A549 (cell line): ENCODE measurements at regions of chr20 and their contacts with region 1.

Region 1: GRCh38 chr20:36835453-36836198 is 40.3 kb upstream of the TLDC2 start:
- DNase-seq: peak; percentile 92 to 98
- ATAC-seq: peak; percentile 97 to 98
- H3K4me3 ChIP-seq: peak overlapping the region; percentile 33
- H3K27ac ChIP-seq: peak overlapping the region; percentile 87 to 92
- H3K4me1 ChIP-seq: peaks cover 34% of the 10 kb centered on the region
- CTCF ChIP-seq: no peak
- EP300 ChIP-seq: no peak
- POLR2A ChIP-seq: 0 out of 2 replicates have a peak, but pooled peaks have one; percentile 15
- RAD21 ChIP-seq: no peak

Region 2: GRCh38 chr20:36815454-36816091 is 20.1 kb before region 1 on chr20:
- CTCF ChIA-PET with region 1: interaction called, 32 read pairs
- POLR2A ChIA-PET with region 1: no interaction called
- DNase-seq: no peak
- ATAC-seq: no peak
- H3K4me3 ChIP-seq: no peak overlapping the region
- H3K27ac ChIP-seq: no peak overlapping the region
- H3K4me1 ChIP-seq: no peaks in the 10 kb centered on the region
- CTCF ChIP-seq: no peak
- EP300 ChIP-seq: no peak
- POLR2A ChIP-seq: no peak
- RAD21 ChIP-seq: no peak

Region 3: DNA sequence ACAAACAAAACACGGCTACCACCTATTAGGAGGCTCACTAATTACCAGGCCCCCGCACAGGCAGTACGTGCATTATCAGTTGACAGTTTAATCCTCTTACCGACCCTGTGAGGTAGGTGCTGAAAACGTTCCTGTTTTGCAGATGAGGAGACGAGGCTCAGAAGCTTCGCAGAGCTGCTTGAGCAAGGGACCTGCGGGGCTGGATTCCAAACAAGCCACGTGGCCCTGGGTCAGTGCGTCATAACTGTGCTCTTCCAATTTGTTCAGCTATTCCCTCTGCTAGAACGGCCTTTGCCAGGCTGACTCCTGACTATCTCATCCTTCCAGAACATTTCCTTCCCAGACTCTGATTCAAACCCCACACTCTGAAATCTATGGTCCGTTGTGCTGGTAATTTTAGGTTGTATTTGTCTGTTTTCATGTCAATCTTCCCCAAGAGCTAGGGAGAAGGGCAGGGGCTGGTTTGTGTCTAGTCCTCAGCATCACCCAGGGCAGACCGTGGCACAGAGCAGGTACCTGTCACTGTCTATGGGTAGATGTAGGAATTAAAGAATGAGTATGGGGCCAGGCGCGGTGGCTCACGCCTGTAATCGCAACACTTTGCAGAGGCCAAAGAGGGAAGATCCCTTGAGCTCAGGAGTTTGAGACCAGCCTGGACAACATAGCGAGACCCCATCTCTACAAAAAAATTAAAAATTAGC is 11.5 kb after region 1 on chr20:
- CTCF ChIA-PET with region 1: interaction called, 16 read pairs
- POLR2A ChIA-PET with region 1: interaction called, 3 read pairs
- DNase-seq: no peak
- ATAC-seq: no peak
- H3K4me3 ChIP-seq: no peak overlapping the region
- H3K27ac ChIP-seq: peak overlapping the region in 1 of 2 experiments; percentile 71; a peak in 2 of 6 replicates
- H3K4me1 ChIP-seq: peaks cover 30% of the 10 kb centered on the region
- CTCF ChIP-seq: no peak
- EP300 ChIP-seq: no peak
- POLR2A ChIP-seq: no peak
- RAD21 ChIP-seq: no peak

Region 4: DNA sequence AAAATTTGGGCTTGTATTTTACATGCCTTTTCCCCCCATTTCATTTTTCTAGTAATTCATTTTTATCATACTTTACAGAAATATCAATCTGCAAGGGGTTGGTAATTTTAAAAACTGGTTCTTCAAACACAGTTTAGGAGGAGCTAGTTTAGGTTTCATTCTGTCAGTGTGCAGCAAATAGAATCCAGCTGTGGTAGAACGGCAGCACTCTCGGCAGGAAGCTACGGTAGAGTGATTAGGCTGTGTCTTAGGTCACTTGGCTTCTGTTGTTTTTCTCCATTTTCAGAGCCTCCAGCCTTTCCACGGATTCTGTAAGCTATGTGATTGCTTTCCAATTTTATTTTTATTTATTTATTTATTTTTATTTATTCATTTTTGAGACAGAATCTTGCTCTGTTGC is 73.0 kb after region 1 on chr20:
- CTCF ChIA-PET with region 1: no interaction called
- POLR2A ChIA-PET with region 1: no interaction called
- DNase-seq: no peak
- ATAC-seq: no peak
- H3K4me3 ChIP-seq: no peak overlapping the region
- H3K27ac ChIP-seq: no peak overlapping the region
- H3K4me1 ChIP-seq: no peaks in the 10 kb centered on the region
- CTCF ChIP-seq: no peak
- EP300 ChIP-seq: no peak
- POLR2A ChIP-seq: no peak
- RAD21 ChIP-seq: no peak